Activated CD4-positive, alpha-beta T cell treated with anti-CD3 and anti-CD28 coated beads for 36 hours (primary cell): ENCODE measurements at regions of chr4 and their contacts with region 1.

Region 1: DNA sequence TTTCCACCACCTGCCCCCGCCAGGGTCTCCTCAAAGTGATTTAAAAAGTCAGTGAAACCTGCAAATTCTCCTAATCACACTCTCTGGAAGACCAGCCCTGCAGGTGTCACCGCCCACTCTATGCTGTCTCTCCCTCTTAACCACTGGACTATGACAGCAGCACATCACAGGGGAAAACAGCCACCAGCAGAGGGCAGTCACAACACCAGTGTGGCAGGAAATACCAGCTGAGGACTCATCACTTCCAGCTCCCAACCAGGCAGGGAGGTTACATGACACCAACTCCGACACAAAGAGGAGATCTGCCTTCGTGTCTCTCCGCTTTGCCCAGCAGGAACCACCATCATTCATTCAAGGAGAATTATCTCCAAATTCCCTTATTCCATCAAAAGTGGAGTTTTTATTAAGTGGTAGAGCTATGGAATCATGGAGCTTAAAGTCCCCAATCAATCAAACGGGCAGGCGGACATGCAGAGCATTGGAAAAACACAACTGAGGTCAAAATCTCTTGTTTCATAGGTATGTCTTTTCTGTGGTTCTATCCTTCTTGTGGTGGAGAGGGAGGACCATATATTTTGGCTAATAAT is 91.3 kb downstream of the NSUN7 start:
- DNase-seq: peak; percentile 93
- ATAC-seq: peak; percentile 97
- H3K4me3 Mint-ChIP-seq: no peak overlapping the region
- H3K27ac Mint-ChIP-seq: no peak overlapping the region
- H3K4me1 Mint-ChIP-seq: peaks cover 5% of the 10 kb centered on the region
- H3K27me3 Mint-ChIP-seq: peaks cover 6% of the 10 kb centered on the region

Region 2: DNA sequence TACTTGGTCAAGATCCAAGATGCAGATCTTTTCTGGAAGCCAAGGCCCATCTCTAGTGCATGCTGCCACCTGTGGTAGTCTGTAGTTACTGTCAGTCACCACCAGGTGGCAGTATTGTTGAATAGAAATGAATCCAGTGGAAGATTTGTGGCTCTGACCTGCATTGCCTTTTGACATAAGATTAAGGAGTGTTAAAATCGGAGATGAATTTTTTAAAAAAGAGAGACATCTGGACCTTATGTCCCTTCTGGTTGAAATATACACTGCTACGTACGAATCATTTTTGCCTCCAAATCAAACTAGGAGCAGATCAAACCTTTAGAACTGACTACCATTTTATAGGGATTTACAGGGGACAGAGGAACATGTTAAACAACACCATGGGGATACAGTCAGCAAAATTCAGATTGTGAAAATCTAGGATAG is 691.1 kb before region 1 on chr4:
- CTCF ChIA-PET with region 1: interaction called, 3 read pairs
- POLR2A ChIA-PET with region 1: no interaction called
- intact Hi-C with region 1: loop called in 1 of 2 experiments (anchors 5 kb)
- DNase-seq: peak; percentile 80
- ATAC-seq: peak; percentile 96
- H3K4me3 Mint-ChIP-seq: no peak overlapping the region
- H3K27ac Mint-ChIP-seq: peak overlapping the region; percentile 61
- H3K4me1 Mint-ChIP-seq: peaks cover 33% of the 10 kb centered on the region
- H3K27me3 Mint-ChIP-seq: no peaks in the 10 kb centered on the region

Region 3: GRCh38 chr4:40736910-40737309 is 104.2 kb before region 1 on chr4:
- CTCF ChIA-PET with region 1: interaction called, 10 read pairs
- POLR2A ChIA-PET with region 1: no interaction called
- intact Hi-C with region 1: loop called (anchors 1 kb)
- DNase-seq: no peak
- ATAC-seq: peak; percentile 30
- H3K4me3 Mint-ChIP-seq: no peak overlapping the region
- H3K27ac Mint-ChIP-seq: no peak overlapping the region
- H3K4me1 Mint-ChIP-seq: peaks cover 3% of the 10 kb centered on the region
- H3K27me3 Mint-ChIP-seq: peaks cover 6% of the 10 kb centered on the region

Region 4: GRCh38 chr4:40825014-40825838 is 15.9 kb before region 1 on chr4:
- CTCF ChIA-PET with region 1: interaction called, 12 read pairs
- POLR2A ChIA-PET with region 1: no interaction called
- intact Hi-C with region 1: no loop called
- DNase-seq: no peak
- ATAC-seq: no peak
- H3K4me3 Mint-ChIP-seq: no peak overlapping the region
- H3K27ac Mint-ChIP-seq: no peak overlapping the region
- H3K4me1 Mint-ChIP-seq: peaks cover 7% of the 10 kb centered on the region
- H3K27me3 Mint-ChIP-seq: peaks cover 4% of the 10 kb centered on the region

Region 5: GRCh38 chr4:40856822-40857362 is 15.8 kb after region 1 on chr4:
- CTCF ChIA-PET with region 1: interaction called, 30 read pairs
- POLR2A ChIA-PET with region 1: no interaction called
- intact Hi-C with region 1: no loop called
- DNase-seq: peak; percentile 79
- ATAC-seq: peak; percentile 99
- H3K4me3 Mint-ChIP-seq: peak overlapping the region; percentile 61
- H3K27ac Mint-ChIP-seq: no peak overlapping the region
- H3K4me1 Mint-ChIP-seq: peaks cover 8% of the 10 kb centered on the region
- H3K27me3 Mint-ChIP-seq: peaks cover 46% of the 10 kb centered on the region